Tibial artery (tissue), 4 donors: ENCODE measurements at regions of chr4 and their contacts with region 1.

Region 1: DNA sequence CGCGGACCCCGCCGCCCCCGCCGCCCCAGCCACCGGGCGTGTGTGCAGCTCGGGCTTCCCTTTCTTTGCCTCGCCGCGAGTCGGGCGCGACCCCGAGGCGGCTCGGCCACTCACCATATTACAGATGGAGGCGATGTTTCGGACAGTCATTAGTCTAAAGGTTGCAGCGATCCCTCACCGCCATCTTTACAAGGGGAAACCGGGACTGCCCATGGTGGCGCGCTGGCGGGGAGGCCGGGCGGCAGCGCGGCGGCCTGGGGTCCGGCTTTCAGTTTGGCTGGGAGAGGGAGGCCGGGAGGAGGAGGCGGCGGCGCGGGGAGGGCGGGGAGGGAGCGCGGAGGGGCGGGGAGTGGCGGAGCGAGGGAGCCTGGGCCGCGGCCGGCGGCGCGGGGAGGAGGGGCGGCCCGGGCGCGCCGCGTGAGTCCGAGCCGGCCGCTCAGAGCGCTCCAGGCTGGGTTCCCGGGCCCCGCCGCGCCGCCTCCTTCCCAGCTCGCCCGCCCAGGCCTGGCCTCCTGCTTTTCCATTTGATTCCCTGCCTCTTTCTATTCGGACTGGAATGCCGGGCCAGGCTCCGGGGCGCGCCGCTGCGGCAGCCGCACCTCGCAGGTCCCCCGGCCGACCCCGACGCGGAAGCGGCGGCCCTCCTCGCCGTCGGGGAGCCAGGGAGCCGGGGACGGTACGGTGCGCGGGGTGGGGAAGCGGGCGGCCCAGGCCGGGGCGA is at the start of gene USP46:
- DNase-seq: peak; percentile 69 to 87
- H3K4me3 ChIP-seq: peak within 1 kb of the TSS; percentile 67 to 95
- H3K27ac ChIP-seq: peak within 1 kb of the TSS; percentile 93 to 96
- H3K4me1 ChIP-seq: peaks cover 0 to 32% (median 18%) of the 10 kb centered on the region in 4 donors
- H3K27me3 ChIP-seq: no peaks in the 10 kb centered on the region
- CTCF ChIP-seq: no peak

Region 2: DNA sequence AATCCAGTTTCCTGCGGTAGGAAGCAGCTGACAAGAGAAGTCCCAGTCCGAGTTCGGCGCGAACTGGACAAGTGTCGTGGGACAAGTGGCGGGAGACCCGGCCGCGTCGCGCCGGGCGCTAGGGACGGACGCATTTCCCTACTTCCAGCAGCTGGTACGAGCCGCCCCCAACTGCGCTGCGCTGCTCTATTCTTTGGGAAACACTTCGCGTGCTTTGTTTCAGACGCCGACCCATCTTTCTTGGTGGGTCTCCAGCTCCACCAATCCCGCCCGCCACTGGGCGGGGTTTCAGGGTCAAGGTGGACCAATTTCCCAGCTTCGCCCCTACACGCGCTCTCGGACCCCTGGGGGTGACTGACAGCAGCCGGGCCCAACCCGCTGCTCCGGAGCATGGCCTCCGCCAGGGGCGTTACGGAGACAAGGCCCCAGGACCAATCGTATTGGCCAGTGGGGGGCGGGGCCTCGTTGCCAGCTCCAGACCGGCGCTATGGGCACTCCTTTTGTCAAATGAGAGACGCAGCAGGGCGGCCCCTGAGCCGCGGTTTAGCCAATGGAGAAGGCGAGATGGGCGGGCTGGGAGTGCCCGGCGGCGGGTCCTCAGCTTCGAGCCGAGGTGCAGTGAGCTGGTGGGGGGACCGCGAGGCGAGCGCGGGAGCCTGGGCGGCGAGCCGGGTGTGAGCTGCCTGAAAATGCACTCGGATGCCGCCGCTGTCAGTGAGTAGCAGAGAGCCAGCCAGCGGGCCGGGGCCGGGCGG is 816.4 kb before region 1 on chr4 and contains the start of gene DCUN1D4:
- intact Hi-C with region 1: loop called (anchors 10 kb)
- DNase-seq: peak; percentile 100
- H3K4me3 ChIP-seq: peak within 1 kb of the TSS; percentile 87 to 89
- H3K27ac ChIP-seq: peak within 1 kb of the TSS; percentile 96 to 99
- H3K4me1 ChIP-seq: peaks cover 0 to 18% (median 10%) of the 10 kb centered on the region in 4 donors
- H3K27me3 ChIP-seq: no peaks in the 10 kb centered on the region
- CTCF ChIP-seq: peak; percentile 47 to 52

Region 3: DNA sequence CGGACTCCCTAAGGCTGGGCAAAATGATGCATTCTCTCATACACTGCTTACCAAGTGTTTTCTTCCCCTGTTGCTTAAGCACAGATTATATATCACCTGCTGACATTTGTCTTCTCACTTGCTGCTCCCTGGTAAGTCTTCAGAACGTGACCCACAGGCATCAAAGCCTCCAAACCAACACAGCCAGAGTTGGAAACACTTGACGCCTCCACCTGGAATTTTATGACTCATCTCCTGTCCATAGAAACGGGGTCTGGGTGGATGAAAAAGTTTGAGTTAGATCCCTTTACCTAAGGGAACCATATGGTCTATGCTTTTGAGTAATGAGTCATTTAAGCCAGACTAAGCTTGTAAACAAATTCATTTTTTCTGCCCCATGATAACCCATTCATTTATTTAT is 251.6 kb before region 1 on chr4:
- intact Hi-C with region 1: no loop called
- DNase-seq: no peak
- H3K4me3 ChIP-seq: no peak overlapping the region
- H3K27ac ChIP-seq: no peak overlapping the region
- H3K4me1 ChIP-seq: no peaks in the 10 kb centered on the region
- H3K27me3 ChIP-seq: no peaks in the 10 kb centered on the region
- CTCF ChIP-seq: no peak

Region 4: GRCh38 chr4:52721968-52722815 is 63.0 kb after region 1 on chr4:
- intact Hi-C with region 1: loop called (anchors 5 kb)
- DNase-seq: peak; percentile 95 to 98
- H3K4me3 ChIP-seq: peak overlapping the region; percentile 81 to 83
- H3K27ac ChIP-seq: peak overlapping the region; percentile 89 to 96
- H3K4me1 ChIP-seq: peaks cover 0 to 13% (median 0%) of the 10 kb centered on the region in 4 donors
- H3K27me3 ChIP-seq: no peaks in the 10 kb centered on the region
- CTCF ChIP-seq: peak in 1 of 2 experiments; percentile 37

Region 5: GRCh38 chr4:52861879-52862616 is 202.9 kb after region 1 on chr4 and contains the start of gene RASL11B:
- intact Hi-C with region 1: loop called (anchors 5 kb)
- DNase-seq: peak; percentile 82 to 92
- H3K4me3 ChIP-seq: peak within 1 kb of the TSS; percentile 71 to 78
- H3K27ac ChIP-seq: peak within 1 kb of the TSS; percentile 77 to 86
- H3K4me1 ChIP-seq: peaks cover 0 to 46% (median 23%) of the 10 kb centered on the region in 4 donors
- H3K27me3 ChIP-seq: no peaks in the 10 kb centered on the region
- CTCF ChIP-seq: peak; percentile 45 to 52